Transverse colon (tissue), 4 donors: ENCODE measurements at regions of chr9 and their contacts with region 1.

Region 1: GRCh38 chr9:106704056-106704640 is 158.8 kb upstream of the ZNF462 start:
- DNase-seq: no peak
- H3K4me3 ChIP-seq: no peak overlapping the region
- H3K27ac ChIP-seq: no peak overlapping the region
- H3K4me1 ChIP-seq: peaks cover 0 to 8% (median 0%) of the 10 kb centered on the region in 4 donors
- H3K27me3 ChIP-seq: no peaks in the 10 kb centered on the region
- CTCF ChIP-seq: no peak
- EP300 ChIP-seq: no peak
- POLR2A ChIP-seq: no peak

Region 2: DNA sequence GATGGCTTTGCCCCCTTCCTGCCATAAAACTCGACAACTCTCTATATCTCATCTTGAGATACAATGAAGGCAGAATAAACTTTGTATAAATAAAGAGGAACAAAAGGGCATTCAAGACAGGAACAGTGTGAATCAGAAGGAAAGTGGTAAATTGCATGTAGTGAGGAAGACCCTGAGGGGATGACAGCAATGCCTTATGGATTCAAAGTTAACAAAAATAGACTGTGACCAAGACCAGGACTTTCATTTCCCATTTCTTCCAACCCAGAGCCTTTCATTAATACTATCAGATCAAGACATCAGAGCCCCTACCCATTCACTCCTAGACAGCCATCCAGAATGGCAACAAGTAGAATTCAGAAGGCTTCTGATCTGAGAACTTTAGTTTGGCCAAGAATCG is 112.4 kb after region 1 on chr9:
- in situ Hi-C with region 1: no loop called
- intact Hi-C with region 1: no loop called
- DNase-seq: no peak
- H3K4me3 ChIP-seq: no peak overlapping the region
- H3K27ac ChIP-seq: no peak overlapping the region
- H3K4me1 ChIP-seq: no peaks in the 10 kb centered on the region
- H3K27me3 ChIP-seq: no peaks in the 10 kb centered on the region
- CTCF ChIP-seq: no peak
- EP300 ChIP-seq: no peak
- POLR2A ChIP-seq: no peak

Region 3: DNA sequence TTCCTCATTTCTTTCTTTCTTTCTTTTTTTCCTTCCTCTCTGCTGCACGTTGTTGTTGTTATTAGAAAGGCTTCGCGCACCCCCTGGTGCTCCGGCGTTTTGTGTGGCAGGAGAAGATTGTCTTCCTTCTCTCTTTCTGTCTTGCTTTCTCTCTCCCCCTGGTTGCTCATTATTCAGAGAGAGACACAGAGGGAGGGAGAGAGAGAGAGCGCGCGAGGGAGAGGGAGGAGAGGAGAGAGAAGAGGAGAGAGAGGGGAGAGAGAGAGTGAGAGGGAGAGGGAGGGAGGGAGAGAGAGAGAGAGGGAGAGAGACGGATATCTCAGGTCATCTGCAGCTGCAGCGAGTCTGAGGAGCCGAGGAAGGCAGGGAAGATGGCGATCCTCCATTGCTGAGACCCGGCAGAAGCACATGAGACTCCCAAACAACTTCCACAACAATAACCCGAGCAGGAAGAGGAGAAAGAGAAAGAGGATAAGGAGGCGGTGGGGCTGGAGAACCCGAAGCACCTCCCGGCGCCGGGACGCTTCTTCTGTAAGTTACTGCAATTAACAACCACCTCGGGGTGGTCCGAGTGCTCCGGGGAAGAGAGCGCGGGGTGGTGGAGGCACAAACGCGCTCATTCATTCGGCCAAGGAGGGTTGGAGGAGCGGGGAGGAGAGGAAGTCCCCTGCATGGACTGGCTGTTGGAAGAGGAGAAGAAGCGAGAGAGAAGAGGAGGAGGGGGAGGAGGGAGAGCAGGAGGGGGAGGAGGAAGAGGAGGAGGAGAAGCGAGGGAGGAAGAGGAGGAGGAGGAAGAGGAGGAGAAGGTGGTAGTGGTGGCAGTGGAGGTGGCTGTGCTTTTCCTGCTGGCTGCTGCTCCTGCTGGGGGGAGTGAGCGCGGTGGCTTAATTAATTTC is 158.9 kb after region 1 on chr9 and contains the start of gene ZNF462:
- in situ Hi-C with region 1: no loop called
- intact Hi-C with region 1: loop called (anchors 10 kb)
- DNase-seq: peak; percentile 47
- H3K4me3 ChIP-seq: peak within 1 kb of the TSS; percentile 65 to 90 (median 80)
- H3K27ac ChIP-seq: peak within 1 kb of the TSS; percentile 83 to 91 (median 87)
- H3K4me1 ChIP-seq: peaks cover 0 to 48% (median 8%) of the 10 kb centered on the region in 4 donors
- H3K27me3 ChIP-seq: peaks cover 12% of the 10 kb centered on the region
- CTCF ChIP-seq: peak in 4 of 5 experiments; percentile 14 to 92 (median 44)
- EP300 ChIP-seq: no peak
- POLR2A ChIP-seq: peak; percentile 40
- total RNA-seq, gene ZNF462: 17.5 to 28.7 (median 22.9) TPM

Region 4: DNA sequence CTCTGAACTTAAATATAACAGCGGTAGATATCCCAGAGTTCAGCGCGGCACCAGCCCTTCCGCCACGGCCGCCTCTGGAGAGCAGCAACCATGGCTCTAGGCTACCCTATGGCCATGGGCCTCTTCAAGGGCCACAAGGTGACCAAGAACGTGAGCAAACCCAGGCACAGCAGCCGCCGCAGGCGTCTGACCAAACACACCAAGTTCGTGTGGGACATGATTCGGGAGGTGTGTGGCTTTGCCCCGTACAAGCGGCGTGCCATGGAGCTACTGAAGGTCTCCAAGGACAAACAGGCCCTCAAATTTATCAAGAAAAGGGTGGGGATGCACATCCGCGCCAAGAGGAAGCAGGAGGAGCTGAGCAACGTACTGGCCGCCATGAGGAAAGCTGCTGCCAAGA is 1922.6 kb after region 1 on chr9:
- in situ Hi-C with region 1: no loop called
- intact Hi-C with region 1: loop called (anchors 5 kb)
- DNase-seq: no peak
- H3K4me3 ChIP-seq: no peak overlapping the region
- H3K27ac ChIP-seq: no peak overlapping the region
- H3K4me1 ChIP-seq: no peaks in the 10 kb centered on the region
- H3K27me3 ChIP-seq: no peaks in the 10 kb centered on the region
- CTCF ChIP-seq: no peak
- EP300 ChIP-seq: no peak
- POLR2A ChIP-seq: no peak